Activated naive CD8-positive, alpha-beta T cell treated with anti-CD3 and anti-CD28 coated beads, Interleukin-2, amount 10 ng/mL, durations not matched to agents 7 days and 5 days (primary cell): ENCODE measurements at regions of chr19 and their contacts with region 1.

Region 1: GRCh38 chr19:16197622-16198369 is at the start of gene AP1M1:
- DNase-seq: peak; percentile 99
- ATAC-seq: peak; percentile 89
- H3K4me3 Mint-ChIP-seq: peak within 1 kb of the TSS; percentile 98
- H3K27ac Mint-ChIP-seq: peak within 1 kb of the TSS; percentile 97
- H3K4me1 Mint-ChIP-seq: peaks cover 35% of the 10 kb centered on the region
- H3K27me3 Mint-ChIP-seq: no peaks in the 10 kb centered on the region
- total RNA-seq, gene AP1M1: 132 to 135 TPM

Region 2: DNA sequence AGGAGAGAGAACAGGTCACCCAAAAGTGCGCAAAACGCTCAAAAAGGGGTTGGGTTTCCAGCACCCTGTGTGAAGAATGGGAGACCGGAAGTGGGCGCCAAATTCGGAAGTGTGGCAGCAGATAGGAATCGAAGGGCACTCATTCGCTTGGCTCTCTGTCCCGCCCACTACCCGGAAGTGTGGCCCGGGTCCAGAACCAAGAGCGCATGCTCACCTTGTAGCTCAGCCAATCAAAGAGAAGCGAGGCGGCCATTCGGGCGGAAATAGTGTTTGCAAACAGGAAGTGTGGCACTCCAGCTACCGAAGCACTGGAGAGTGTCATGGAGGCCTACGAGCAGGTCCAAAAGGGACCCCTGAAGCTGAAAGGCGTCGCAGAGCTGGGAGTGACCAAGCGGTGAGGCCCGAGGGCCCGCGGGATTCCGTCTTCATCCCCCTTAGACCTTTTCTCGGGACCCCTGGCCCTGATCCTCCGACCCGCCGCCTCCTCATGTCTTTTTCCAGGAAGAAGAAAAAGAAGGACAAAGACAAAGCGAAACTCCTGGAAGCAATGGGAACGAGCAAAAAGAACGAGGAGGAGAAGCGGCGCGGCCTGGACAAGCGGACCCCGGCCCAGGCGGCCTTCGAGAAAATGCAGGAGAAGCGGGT is 12.6 kb before region 1 on chr19 and contains the start of gene FAM32A:
- POLR2A ChIA-PET with region 1: interaction called, 12 read pairs
- DNase-seq: peak; percentile 95
- ATAC-seq: peak; percentile 96
- H3K4me3 Mint-ChIP-seq: peak within 1 kb of the TSS; percentile 95
- H3K27ac Mint-ChIP-seq: peak within 1 kb of the TSS; percentile 92
- H3K4me1 Mint-ChIP-seq: peaks cover 19% of the 10 kb centered on the region
- H3K27me3 Mint-ChIP-seq: peaks cover 2% of the 10 kb centered on the region
- total RNA-seq, gene FAM32A: 61.4 to 63.4 TPM